WTC11 (cell line): ENCODE measurements at regions of chr11 and their contacts with region 1.

Region 1: GRCh38 chr11:44529895-44530412 is 35.5 kb upstream of the CD82 start:
- DNase-seq: no peak
- ATAC-seq: no peak
- H3K4me3 Mint-ChIP-seq: no peak overlapping the region
- H3K27ac Mint-ChIP-seq: no peak overlapping the region
- H3K4me1 Mint-ChIP-seq: peaks cover 23% of the 10 kb centered on the region
- H3K27me3 Mint-ChIP-seq: no peaks in the 10 kb centered on the region
- CTCF ChIP-seq: no peak

Region 2: DNA sequence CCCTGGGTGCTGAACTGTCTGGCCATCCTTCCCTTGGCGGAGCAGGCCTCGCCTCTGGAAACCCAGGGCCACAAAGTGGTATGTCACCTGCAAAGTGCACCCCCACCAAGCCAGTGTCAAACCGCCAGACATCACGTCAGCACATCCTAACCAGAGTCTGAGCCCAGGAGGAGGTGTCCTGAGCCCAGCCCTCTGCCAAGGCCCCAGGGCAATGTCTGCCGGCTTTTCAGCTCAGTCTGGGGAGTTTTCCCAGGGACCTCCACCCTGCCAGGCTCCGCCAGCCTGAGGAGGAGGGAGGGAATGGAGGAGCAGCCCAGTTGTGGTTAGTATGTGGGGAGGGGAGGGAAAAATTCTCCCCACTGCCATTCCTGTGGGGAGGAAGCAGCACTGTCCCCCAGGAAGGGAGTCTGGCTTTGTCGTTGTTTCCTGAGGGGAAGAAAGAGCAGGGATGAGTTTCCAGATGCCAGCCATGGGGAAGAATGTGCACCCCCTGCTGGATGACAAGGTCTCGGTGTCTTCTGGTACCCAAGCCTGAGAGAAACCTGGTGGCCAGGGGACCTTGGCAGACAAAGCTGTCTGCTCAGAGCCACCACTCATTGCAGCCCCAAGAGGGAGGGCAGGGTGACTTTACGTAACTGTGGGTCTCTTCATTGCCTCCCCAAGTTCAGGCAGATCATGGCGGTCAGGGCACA is 45.9 kb before region 1 on chr11:
- CTCF ChIA-PET with region 1: no interaction called
- POLR2A ChIA-PET with region 1: interaction called, 11 read pairs
- DNase-seq: peak; percentile 31
- ATAC-seq: peak; percentile 46; the same call in 1 of the 2 replicates
- H3K4me3 Mint-ChIP-seq: no peak overlapping the region
- H3K27ac Mint-ChIP-seq: no peak overlapping the region
- H3K4me1 Mint-ChIP-seq: no peaks in the 10 kb centered on the region
- H3K27me3 Mint-ChIP-seq: peaks cover 4% of the 10 kb centered on the region
- CTCF ChIP-seq: no peak

Region 3: DNA sequence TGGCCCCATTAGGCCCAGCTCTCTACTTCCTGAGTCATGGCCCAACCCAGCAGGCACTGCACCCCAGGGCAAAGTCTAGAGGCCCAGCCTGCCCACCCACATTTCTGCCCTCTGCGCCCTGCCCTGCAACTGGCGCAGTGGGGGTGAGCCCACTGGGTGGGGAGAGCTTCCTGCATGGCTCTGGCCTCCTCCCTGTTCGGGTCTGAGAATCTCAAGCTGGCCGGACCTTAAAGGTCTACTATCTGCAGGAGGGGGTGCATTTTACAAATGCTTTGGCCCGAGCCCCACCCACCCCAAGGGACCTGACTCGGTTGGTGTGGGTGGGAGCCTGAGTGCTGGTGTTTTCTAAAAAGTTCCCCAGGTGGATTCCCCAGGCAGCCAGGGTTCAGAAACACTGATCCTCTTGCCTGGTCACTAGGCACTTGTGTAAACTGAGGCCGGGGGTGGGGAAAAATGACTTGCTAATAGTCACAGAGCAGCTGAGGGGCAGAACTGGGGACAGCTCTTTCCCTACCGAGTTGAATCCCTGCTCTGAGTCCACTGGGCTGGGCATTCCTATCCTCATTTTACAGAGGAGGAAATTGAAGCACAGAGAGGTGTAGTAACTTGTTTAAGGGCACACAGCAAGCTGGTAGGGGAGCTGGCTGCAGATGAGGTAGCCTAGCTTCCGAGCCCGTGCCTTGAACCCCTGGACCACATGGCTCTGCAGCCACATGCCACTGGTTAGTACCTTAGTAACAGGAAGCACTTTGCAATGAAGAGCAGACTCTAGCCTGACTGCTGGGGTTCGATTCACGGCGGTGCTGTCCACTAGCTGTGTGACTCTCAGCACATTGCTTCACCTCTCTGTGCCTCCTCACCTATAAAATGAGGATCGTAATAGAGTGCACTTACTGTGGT is 71.8 kb after region 1 on chr11:
- CTCF ChIA-PET with region 1: no interaction called
- POLR2A ChIA-PET with region 1: no interaction called
- DNase-seq: no peak
- ATAC-seq: no peak
- H3K4me3 Mint-ChIP-seq: no peak overlapping the region
- H3K27ac Mint-ChIP-seq: no peak overlapping the region
- H3K4me1 Mint-ChIP-seq: peaks cover 23% of the 10 kb centered on the region
- H3K27me3 Mint-ChIP-seq: no peaks in the 10 kb centered on the region
- CTCF ChIP-seq: no peak